ENCODE measurements at regions of chr11 and their contacts with region 1.

Region 1: GRCh38 chr11:94183886-94184264 is 55.2 kb downstream of the PANX1 start:
- DNase-seq: peak; percentile 54 to 66
- ATAC-seq: peak in 6 of 8 donors; percentile 58 to 71 (median 66)
- H3K4me3 ChIP-seq: no peak overlapping the region
- H3K27ac ChIP-seq: no peak overlapping the region
- H3K4me1 ChIP-seq: peaks cover 0 to 14% (median 0%) of the 10 kb centered on the region in 9 donors
- H3K27me3 ChIP-seq: no peaks in the 10 kb centered on the region
- CTCF ChIP-seq: peak; percentile 51 to 85 (median 73)

Region 2: DNA sequence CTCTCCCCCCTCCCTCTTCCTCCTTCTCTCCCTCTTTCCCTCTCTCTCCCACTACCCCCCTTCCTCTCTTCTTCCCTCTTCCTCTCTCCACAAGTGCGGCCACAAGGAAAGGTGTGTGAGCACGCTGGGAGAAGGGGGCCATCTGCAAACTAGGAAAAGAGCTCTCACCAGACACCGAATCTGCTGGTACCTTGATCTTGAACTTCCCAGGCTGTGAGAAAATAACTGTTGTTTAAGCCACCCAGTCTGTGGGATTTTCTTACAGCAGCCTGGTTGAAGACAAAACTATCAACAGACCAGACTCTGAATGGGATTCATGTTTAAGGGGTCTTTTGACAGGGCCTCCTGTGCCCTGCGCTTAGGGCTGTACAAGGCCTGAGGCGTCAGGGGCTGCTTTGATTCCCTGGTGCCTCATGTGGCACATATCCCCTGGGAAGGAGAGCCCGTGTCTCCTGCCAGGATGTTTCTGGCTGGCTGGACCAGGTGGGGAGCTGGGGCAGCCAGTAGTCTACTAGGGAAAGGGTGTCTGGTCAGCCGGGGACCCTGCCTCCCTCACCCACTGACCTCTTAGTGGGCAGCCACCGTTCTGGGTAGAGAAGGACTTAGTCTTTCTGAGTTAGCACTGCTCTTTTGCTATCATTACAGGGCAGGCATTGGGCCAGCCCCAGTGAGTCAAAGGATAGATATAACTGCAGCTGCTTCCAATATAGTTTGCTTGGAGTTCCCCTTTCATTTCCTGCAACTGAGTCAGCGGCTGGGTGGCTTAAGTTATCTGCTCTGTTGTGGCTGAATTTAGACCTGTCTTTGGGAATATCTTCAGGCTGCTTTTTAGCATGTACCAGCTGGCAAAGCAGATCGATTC is 49.0 kb before region 1 on chr11:
- intact Hi-C with region 1: loop called in 1 of 10 experiments (anchors 5 kb)
- DNase-seq: peak; percentile 61 to 78
- ATAC-seq: peak; percentile 63 to 90 (median 82)
- H3K4me3 ChIP-seq: peak overlapping the region in 3 of 10 donors; percentile 3 to 12 (median 11)
- H3K27ac ChIP-seq: peak overlapping the region; percentile 59 to 96 (median 83)
- H3K4me1 ChIP-seq: peaks cover 15 to 91% (median 70%) of the 10 kb centered on the region in 9 donors
- H3K27me3 ChIP-seq: no peaks in the 10 kb centered on the region
- CTCF ChIP-seq: no peak

Region 3: DNA sequence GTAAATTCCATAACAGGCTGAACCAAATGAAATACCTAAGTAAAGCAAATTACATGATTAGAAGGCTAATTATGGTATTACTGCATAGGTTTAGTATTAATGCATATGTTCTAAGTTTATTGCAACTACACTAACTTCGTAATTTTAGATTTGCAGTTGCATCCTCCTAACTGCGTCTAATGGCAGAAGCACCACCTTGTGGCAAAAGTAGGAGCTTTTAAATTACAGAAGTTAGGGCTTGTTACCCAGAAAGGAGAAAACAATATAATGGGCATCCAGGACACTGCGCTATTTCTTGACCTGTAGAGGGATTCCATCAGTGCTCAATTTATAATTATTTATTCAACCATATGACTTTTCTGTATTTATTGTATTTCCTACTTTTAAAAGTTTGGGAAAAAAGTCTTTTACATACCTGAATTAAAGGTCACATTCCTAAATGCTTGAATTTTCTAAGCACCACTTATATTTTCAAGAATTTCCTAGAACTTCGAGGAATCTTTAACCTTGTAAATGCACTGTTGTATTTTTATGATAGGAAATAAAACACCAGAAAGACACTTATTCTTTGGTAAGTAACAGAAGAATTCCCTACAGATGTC is 233.6 kb after region 1 on chr11:
- intact Hi-C with region 1: loop called in 4 of 10 experiments (anchors 5 to 10 kb)
- DNase-seq: no peak
- ATAC-seq: peak in 2 of 8 donors; percentile 47 to 50
- H3K4me3 ChIP-seq: no peak overlapping the region
- H3K27ac ChIP-seq: no peak overlapping the region
- H3K4me1 ChIP-seq: no peaks in the 10 kb centered on the region
- H3K27me3 ChIP-seq: no peaks in the 10 kb centered on the region
- CTCF ChIP-seq: peak; percentile 13 to 70 (median 58)